ENCODE measurements at regions of chr1 and their contacts with region 1.

Region 1: GRCh38 chr1:88455621-88456256 is 228.3 kb upstream of the PKN2 start:
- DNase-seq: no peak
- H3K4me3 ChIP-seq: no peak overlapping the region
- H3K27ac ChIP-seq: peak overlapping the region in 2 of 59 donors; percentile 18 to 23
- H3K27me3 ChIP-seq: no peaks in the 10 kb centered on the region
- CTCF ChIP-seq: no peak

Region 2: GRCh38 chr1:88401313-88401712 is 54.4 kb before region 1 on chr1:
- intact Hi-C with region 1: no loop called
- DNase-seq: no peak
- H3K4me3 ChIP-seq: no peak overlapping the region
- H3K27ac ChIP-seq: no peak overlapping the region
- H3K27me3 ChIP-seq: no peaks in the 10 kb centered on the region
- CTCF ChIP-seq: no peak

Region 3: GRCh38 chr1:88683541-88684481 is 228.1 kb after region 1 on chr1 and contains the start of gene PKN2:
- intact Hi-C with region 1: loop called in 1 of 2 experiments (anchors 10 kb)
- DNase-seq: peak; percentile 87 to 96 (median 91)
- H3K4me3 ChIP-seq: peak within 1 kb of the TSS; percentile 58 to 98 (median 90)
- H3K27ac ChIP-seq: peak within 1 kb of the TSS; percentile 44 to 96 (median 89)
- H3K27me3 ChIP-seq: no peaks in the 10 kb centered on the region
- CTCF ChIP-seq: peak in 52 of 56 donors; percentile 21 to 72 (median 48)
- total RNA-seq, gene PKN2: 26.8 to 61.3 (median 41.1) TPM